Thyroid gland (tissue), 4 donors: ENCODE measurements at regions of chr19 and their contacts with region 1.

Region 1: DNA sequence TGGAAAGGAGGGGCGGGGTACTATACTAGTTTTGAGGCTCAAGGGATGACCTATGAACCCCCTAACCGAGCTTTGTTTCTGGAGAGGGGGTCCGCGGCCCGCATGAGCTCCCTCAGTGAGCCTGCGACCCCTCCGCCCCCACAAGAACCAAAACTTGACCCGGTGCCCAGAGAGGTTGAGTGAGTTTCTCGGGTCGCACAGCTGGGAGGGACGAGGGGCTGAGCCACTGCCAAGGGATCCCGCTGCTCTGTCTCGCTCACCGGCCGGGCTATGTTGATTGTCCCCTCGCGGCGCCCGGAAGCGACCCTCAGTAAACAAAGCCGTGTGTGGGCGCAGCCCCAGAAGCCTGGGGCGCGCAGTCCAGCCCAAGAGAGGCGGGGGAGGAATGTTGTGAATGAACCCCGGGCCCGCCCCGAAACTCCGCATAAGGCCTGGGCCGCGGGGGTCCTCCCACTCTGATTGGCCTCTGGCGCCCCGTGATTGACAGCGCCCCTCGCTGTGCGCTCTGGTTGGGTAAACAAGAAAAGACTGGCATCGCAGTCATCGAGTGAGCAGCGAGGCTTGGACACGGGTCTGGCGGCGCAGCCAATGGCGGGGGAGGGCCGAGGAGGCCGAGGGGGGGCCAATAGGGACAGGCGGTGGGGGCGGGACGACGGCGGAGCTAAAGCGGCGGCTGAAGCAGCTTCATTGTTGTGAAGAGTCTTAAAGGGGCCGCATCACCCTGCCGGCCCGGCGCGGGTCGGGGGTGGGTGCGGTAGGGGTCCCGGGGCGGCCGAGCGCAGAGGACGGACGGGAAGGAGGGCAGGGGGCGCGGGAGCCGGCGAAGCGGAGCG is at the start of gene ZSWIM4:
- DNase-seq: peak; percentile 100
- H3K4me3 ChIP-seq: peak within 1 kb of the TSS; percentile 33 to 62 (median 50)
- H3K27ac ChIP-seq: peak within 1 kb of the TSS; percentile 86 to 97 (median 87)
- H3K4me1 ChIP-seq: peaks cover 21 to 25% of the 10 kb centered on the region in 2 donors
- H3K27me3 ChIP-seq: no peaks in the 10 kb centered on the region
- CTCF ChIP-seq: no peak
- POLR2A ChIP-seq: peak; percentile 61 to 74
- total RNA-seq, gene ZSWIM4: 6.9 to 15.6 (median 8.9) TPM

Region 2: DNA sequence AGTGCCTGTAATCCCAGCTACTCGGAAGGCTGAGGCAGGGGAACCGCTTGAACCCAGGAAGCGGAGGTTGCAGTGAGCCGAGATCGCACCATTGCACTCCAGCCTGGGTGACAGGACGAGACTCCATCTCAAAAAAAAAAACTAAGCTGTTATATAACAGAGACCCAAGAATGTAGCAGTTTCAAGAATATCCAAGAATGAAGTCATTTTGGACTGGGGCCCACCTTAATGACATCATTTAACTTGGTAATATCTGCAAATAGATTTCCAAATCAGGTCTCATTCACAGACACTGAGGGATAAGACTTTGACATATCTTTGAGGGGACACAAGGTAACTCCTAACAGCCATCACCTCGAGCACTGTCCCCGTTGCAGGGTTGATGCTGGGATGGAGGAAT is 67.2 kb before region 1 on chr19:
- intact Hi-C with region 1: no loop called
- DNase-seq: no peak
- H3K4me3 ChIP-seq: no peak overlapping the region
- H3K27ac ChIP-seq: no peak overlapping the region
- H3K4me1 ChIP-seq: peaks cover 7 to 13% of the 10 kb centered on the region in 2 donors
- H3K27me3 ChIP-seq: no peaks in the 10 kb centered on the region
- CTCF ChIP-seq: no peak
- POLR2A ChIP-seq: no peak

Region 3: GRCh38 chr19:13764101-13764807 is 30.7 kb before region 1 on chr19 and contains the start of gene MRI1:
- intact Hi-C with region 1: no loop called
- DNase-seq: peak; percentile 79 to 84
- H3K4me3 ChIP-seq: peak within 1 kb of the TSS in 2 of 3 donors; percentile 50 to 56
- H3K27ac ChIP-seq: peak within 1 kb of the TSS; percentile 4 to 67 (median 63)
- H3K4me1 ChIP-seq: peaks cover 10% of the 10 kb centered on the region in 2 donors
- H3K27me3 ChIP-seq: no peaks in the 10 kb centered on the region
- CTCF ChIP-seq: peak in 1 of 6 experiments; percentile 6
- POLR2A ChIP-seq: peak in 1 of 2 donors; percentile 74
- total RNA-seq, gene MRI1: 53.0 to 90.4 (median 70.6) TPM

Region 4: GRCh38 chr19:13842401-13843103 is 47.6 kb after region 1 on chr19:
- intact Hi-C with region 1: loop called (anchors 5 kb)
- DNase-seq: peak; percentile 83
- H3K4me3 ChIP-seq: peak overlapping the region; percentile 10 to 94 (median 84)
- H3K27ac ChIP-seq: peak overlapping the region; percentile 92 to 99 (median 96)
- H3K4me1 ChIP-seq: peaks cover 29 to 68% of the 10 kb centered on the region in 2 donors
- H3K27me3 ChIP-seq: no peaks in the 10 kb centered on the region
- CTCF ChIP-seq: peak in 1 of 6 experiments; percentile 7
- POLR2A ChIP-seq: peak; percentile 79 to 96